Motor neuron (in vitro differentiated cells): ENCODE measurements at regions of chr17 and their contacts with region 1.

Region 1: DNA sequence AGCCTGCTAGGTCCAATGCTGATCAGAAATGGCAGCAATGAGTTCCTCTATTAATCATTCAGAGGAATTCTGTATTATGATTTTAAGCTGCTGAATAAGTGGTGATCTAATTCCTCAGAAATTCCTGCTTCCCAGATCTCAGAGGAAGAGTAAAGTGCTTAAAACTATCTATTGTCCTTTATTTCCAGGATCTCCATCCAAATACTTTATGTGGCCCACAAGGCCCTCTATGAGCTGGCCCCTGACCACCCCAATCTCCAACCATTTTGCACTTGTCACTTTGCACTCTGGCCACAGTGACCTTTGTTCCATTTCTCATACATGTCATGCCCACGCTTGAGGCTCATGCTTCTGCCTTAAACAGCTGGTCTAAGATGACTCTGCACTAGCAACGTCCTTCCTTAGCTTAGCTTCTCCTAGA is 93.7 kb downstream of the CA10 start:
- ATAC-seq: no peak
- H3K4me3 ChIP-seq: no peak overlapping the region
- H3K27ac ChIP-seq: no peak overlapping the region
- H3K4me1 ChIP-seq: no peaks in the 10 kb centered on the region

Region 2: GRCh38 chr17:51951741-51952140 is 113.1 kb before region 1 on chr17:
- in situ Hi-C with region 1: loop called in 1 of 9 experiments (anchors 25 kb)
- ATAC-seq: no peak
- H3K4me3 ChIP-seq: no peak overlapping the region
- H3K27ac ChIP-seq: no peak overlapping the region
- H3K4me1 ChIP-seq: peaks cover 2 to 8% of the 10 kb centered on the region in 2 donors